HepG2 (cell line): ENCODE measurements at regions of chr17 and their contacts with region 1.

Region 1: DNA sequence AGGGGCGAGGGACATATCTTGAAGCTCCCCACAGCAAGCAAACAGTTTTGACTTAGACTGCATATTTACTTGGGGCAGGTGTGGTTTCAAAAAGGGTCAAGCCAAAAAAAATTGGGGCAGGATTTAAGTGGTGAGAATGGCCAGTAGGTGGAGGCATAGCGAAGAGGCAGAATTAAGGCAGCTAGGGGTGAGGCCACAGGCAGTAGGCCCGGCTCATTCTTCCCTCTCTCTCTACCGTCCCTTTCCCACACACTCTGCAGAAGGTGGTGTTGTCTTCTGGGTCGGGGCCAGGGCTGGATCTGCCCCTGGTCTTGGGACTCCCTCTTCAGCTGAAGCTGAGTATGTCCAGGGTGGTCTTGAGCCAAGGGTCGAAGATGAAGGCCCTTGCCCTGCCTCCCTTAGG is 2.6 kb downstream of the SHBG start:
- DNase-seq: no peak
- ATAC-seq: peak; percentile 37
- H3K4me3 ChIP-seq: no peak overlapping the region
- H3K27ac ChIP-seq: peak overlapping the region; percentile 46
- H3K4me1 ChIP-seq: peaks cover 55% of the 10 kb centered on the region
- H3K27me3 ChIP-seq: no peaks in the 10 kb centered on the region; a peak in 1 of 5 replicates
- CTCF ChIP-seq: peak; percentile 55
- EP300 ChIP-seq: no peak
- POLR2A ChIP-seq: no peak
- RAD21 ChIP-seq: no peak

Region 2: DNA sequence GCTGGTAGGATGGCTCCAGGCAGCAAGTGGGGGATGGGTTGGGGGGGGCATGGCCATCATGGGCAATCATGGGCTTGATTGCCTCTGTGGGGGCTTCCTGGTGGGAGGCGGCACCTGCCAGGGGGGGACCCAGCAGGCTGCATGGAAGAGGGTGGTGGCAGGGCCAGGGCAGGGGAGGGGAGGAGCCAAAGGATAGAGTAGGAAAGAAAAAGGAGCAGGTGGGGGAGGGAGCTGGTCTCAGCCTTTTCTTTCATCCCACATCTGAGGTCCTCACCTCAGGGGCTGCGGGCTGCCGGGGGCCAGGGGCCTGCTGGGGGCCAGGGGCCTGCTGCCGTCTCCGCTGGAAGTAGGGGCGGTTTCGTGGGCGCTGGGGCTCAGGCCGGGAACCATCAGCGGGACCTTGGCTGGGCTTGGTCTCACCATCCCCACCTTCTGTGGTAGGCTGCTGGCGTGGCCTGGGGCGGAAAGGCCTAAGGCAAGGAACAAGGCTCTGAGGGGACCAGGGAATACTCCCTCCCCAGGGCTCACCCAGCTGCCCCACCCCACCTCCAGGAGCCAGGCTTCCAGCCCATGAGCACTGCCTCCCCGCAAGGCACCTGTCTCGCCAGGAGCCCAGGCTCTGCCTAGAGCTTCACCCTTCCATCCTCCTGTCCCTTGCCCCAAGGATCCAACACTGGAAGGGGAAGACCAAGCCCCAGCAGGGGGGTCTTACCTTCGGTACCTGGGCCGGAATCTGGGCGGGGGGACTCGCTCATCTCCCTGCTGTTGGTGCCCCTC is 343.0 kb before region 1 on chr17:
- CTCF ChIA-PET with region 1: no interaction called
- POLR2A ChIA-PET with region 1: no interaction called
- in situ Hi-C with region 1: no loop called
- intact Hi-C with region 1: no loop called
- DNase-seq: no peak
- ATAC-seq: no peak
- H3K4me3 ChIP-seq: no peak overlapping the region
- H3K27ac ChIP-seq: no peak overlapping the region
- H3K4me1 ChIP-seq: peaks cover 26% of the 10 kb centered on the region
- H3K27me3 ChIP-seq: peaks cover 0 to 11% of the 10 kb centered on the region in 2 experiments; a peak in 2 of 5 replicates
- CTCF ChIP-seq: no peak
- EP300 ChIP-seq: no peak
- POLR2A ChIP-seq: no peak
- RAD21 ChIP-seq: no peak

Region 3: DNA sequence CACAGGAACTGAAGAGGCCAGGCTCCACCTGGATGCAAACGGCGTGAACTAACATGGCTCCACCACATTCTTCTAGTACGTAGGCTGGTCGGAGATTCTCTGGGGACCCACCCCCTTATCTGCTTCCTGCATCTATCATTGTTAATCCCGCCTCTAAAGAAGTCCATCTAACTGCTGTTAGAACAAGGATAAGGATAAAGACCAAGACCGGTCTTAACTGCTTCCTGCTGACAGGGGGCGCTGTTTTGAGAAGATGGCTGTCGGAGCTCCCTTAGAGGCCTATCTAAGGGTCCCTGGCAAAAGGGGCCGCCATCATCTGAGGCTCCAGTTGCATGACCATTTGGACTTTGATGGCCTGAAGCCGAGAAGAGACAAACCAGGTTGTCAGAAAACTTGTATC is 109.5 kb before region 1 on chr17:
- CTCF ChIA-PET with region 1: no interaction called
- POLR2A ChIA-PET with region 1: no interaction called
- in situ Hi-C with region 1: no loop called
- intact Hi-C with region 1: no loop called
- DNase-seq: peak; percentile 43
- ATAC-seq: peak; percentile 70
- H3K4me3 ChIP-seq: no peak overlapping the region
- H3K27ac ChIP-seq: no peak overlapping the region
- H3K4me1 ChIP-seq: no peaks in the 10 kb centered on the region
- H3K27me3 ChIP-seq: peaks cover 0 to 1% of the 10 kb centered on the region in 2 experiments; a peak in 1 of 5 replicates
- CTCF ChIP-seq: peak; percentile 62
- EP300 ChIP-seq: no peak
- POLR2A ChIP-seq: no peak
- RAD21 ChIP-seq: no peak

Region 4: GRCh38 chr17:7583253-7584109 is 49.0 kb before region 1 on chr17 and contains the start of gene MPDU1:
- CTCF ChIA-PET with region 1: interaction called, 3 read pairs
- POLR2A ChIA-PET with region 1: interaction called, 25 read pairs
- in situ Hi-C with region 1: no loop called
- intact Hi-C with region 1: no loop called
- DNase-seq: peak; percentile 81
- ATAC-seq: peak; percentile 22
- H3K4me3 ChIP-seq: peak within 1 kb of the TSS; percentile 73 to 83 (median 77)
- H3K27ac ChIP-seq: peak within 1 kb of the TSS; percentile 96
- H3K4me1 ChIP-seq: peaks cover 55% of the 10 kb centered on the region
- H3K27me3 ChIP-seq: no peaks in the 10 kb centered on the region; a peak in 1 of 5 replicates
- CTCF ChIP-seq: peak; percentile 20; the same call in 1 of the 2 replicates
- EP300 ChIP-seq: 0 out of 4 replicates have a peak, but pooled peaks of 1 of the 2 experiments have one; percentile 18
- POLR2A ChIP-seq: peak; percentile 79 to 98
- RAD21 ChIP-seq: no peak
- total RNA-seq, gene MPDU1: 59.5 and 112 TPM in 2 replicates

Region 5: DNA sequence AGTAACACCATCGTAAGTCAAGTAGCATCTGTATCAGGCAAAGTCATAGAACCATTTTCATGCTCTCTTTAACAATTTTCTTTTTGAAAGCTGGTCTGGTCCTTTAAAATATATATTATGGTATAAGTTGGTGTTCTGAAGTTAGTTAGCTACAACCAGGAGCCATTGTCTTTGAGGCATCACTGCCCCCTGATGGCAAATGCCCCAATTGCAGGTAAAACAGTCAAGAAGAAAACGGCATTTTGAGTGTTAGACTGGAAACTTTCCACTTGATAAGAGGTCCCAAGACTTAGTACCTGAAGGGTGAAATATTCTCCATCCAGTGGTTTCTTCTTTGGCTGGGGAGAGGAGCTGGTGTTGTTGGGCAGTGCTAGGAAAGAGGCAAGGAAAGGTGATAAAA is 40.7 kb after region 1 on chr17:
- CTCF ChIA-PET with region 1: interaction called, 10 read pairs
- POLR2A ChIA-PET with region 1: interaction called, 4 read pairs
- in situ Hi-C with region 1: no loop called
- intact Hi-C with region 1: loop called (anchors 5 kb)
- DNase-seq: peak; percentile 27
- ATAC-seq: no peak
- H3K4me3 ChIP-seq: no peak overlapping the region
- H3K27ac ChIP-seq: no peak overlapping the region
- H3K4me1 ChIP-seq: no peaks in the 10 kb centered on the region
- H3K27me3 ChIP-seq: no peaks in the 10 kb centered on the region; a peak in 1 of 5 replicates
- CTCF ChIP-seq: peak; percentile 72
- EP300 ChIP-seq: no peak
- POLR2A ChIP-seq: no peak
- RAD21 ChIP-seq: no peak

Region 6: DNA sequence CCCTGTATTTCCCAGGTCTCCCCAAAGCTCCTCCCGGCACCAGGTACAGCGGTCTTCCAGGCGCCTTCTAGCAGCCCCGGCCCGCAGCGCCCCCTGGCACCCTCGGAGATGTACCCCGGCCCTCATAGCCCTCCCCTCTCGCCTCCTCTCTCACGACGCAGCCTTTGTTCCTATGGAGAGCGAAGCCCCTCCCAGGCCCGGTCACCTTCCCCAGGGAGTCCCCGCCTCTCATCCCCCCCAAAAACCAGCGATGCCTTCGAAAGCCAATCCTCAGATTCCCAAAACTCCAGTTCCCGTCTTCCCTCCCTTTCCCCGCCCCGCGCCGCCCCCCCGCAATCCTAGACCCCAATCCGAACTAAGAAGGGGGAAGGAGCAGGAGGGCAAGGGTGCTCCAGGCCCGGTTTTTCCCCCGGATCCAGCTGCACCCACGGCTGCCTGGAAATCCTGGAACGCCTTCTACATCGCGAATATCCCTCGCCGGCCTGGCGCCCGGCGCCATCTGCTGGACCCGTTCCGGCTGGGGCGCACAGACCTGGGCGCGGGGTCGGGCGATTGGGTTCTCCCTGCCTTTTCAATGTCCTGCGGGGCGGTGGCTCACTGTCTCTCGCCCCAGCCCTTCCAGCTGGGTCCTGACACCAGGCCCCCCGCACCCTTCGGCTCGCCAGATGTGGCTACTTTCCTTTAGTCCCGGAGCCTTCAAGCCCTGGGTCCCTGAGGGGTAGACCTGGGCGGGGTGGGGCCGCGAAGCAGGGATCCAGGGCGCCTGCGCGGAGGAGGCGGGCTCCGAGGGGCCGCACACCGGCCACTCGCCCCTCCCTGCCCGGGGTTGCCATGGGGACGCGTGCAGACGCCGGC is 84.6 kb after region 1 on chr17 and contains the start of gene DNAH2:
- CTCF ChIA-PET with region 1: no interaction called
- POLR2A ChIA-PET with region 1: no interaction called
- in situ Hi-C with region 1: loop called (anchors 5 kb)
- intact Hi-C with region 1: no loop called
- DNase-seq: peak; percentile 60
- ATAC-seq: peak; percentile 86
- H3K4me3 ChIP-seq: peak within 1 kb of the TSS; percentile 49 to 72 (median 62); a peak in 5 of 6 replicates
- H3K27ac ChIP-seq: no peak within 1 kb of the TSS
- H3K4me1 ChIP-seq: peaks cover 27% of the 10 kb centered on the region
- H3K27me3 ChIP-seq: peaks cover 12 to 85% of the 10 kb centered on the region in 2 experiments
- CTCF ChIP-seq: peak; percentile 87
- EP300 ChIP-seq: no peak
- POLR2A ChIP-seq: no peak
- RAD21 ChIP-seq: peak; percentile 71
- total RNA-seq, gene DNAH2: not detected in 2 replicates